HepG2 (cell line): ENCODE measurements at regions of chr17 and their contacts with region 1.

Region 1: GRCh38 chr17:72699545-72699944 is 392.9 kb downstream of the SLC39A11 start:
- DNase-seq: no peak
- ATAC-seq: no peak
- H3K4me3 ChIP-seq: no peak overlapping the region
- H3K27ac ChIP-seq: no peak overlapping the region
- H3K4me1 ChIP-seq: peaks cover 46% of the 10 kb centered on the region
- H3K27me3 ChIP-seq: no peaks in the 10 kb centered on the region
- CTCF ChIP-seq: no peak
- EP300 ChIP-seq: no peak
- POLR2A ChIP-seq: no peak
- RAD21 ChIP-seq: no peak

Region 2: DNA sequence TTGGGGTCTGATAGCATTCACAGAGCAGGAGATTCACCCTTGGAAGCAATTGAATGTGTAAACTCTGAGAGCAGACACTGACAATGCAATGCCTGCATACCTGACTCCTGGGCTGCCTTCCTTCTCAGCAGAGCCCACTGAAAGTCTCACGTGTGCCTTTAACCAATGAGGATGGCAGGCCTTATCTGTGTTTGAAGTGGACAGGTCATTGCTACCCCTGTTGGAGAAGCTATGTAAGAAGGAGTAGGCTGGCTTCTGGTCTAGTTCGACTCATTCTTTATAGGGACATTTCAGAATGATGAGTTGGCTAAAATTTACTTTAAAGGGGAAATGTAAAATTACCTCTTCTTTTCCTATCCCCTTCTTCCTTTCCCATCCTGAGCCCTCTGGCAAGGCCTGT is 53.4 kb before region 1 on chr17:
- CTCF ChIA-PET with region 1: no interaction called
- POLR2A ChIA-PET with region 1: no interaction called
- in situ Hi-C with region 1: no loop called
- intact Hi-C with region 1: no loop called
- DNase-seq: peak; percentile 27
- ATAC-seq: no peak
- H3K4me3 ChIP-seq: no peak overlapping the region
- H3K27ac ChIP-seq: no peak overlapping the region
- H3K4me1 ChIP-seq: no peaks in the 10 kb centered on the region
- H3K27me3 ChIP-seq: no peaks in the 10 kb centered on the region
- CTCF ChIP-seq: no peak
- EP300 ChIP-seq: no peak
- POLR2A ChIP-seq: no peak
- RAD21 ChIP-seq: no peak

Region 3: GRCh38 chr17:72715906-72716572 is 16.5 kb after region 1 on chr17:
- CTCF ChIA-PET with region 1: no interaction called
- POLR2A ChIA-PET with region 1: interaction called, 3 read pairs
- in situ Hi-C with region 1: no loop called
- intact Hi-C with region 1: loop called (anchors 1 kb)
- DNase-seq: peak; percentile 94
- ATAC-seq: peak; percentile 74
- H3K4me3 ChIP-seq: no peak overlapping the region
- H3K27ac ChIP-seq: peak overlapping the region; percentile 47
- H3K4me1 ChIP-seq: peaks cover 29% of the 10 kb centered on the region
- H3K27me3 ChIP-seq: no peaks in the 10 kb centered on the region
- CTCF ChIP-seq: no peak
- EP300 ChIP-seq: peak; percentile 39 to 79; a peak in 3 of 4 replicates
- POLR2A ChIP-seq: no peak
- RAD21 ChIP-seq: no peak